H1 (cell line): ENCODE measurements at regions of chr3 and their contacts with region 1.

Region 1: DNA sequence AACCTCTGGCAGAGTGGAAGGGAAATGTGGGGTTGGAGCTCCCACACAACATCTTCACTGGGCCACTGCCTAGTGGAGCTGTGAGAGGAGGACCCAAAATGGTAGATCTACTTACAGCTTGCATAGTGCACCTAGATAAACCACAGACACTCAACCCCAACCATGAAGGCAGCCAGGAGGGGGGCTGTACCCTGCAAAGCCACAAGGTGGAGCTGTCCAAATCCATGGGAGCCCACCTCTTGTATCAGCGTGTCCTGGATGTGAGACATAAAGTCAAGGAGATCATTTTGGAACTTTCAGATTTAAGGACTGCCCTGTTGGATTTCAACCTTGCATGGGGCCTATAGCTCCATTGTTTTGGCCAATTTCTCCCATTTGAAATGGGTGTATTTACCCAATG is 20.9 kb downstream of the TP63 start:
- DNase-seq: peak in 1 of 2 experiments; percentile 86
- H3K4me3 ChIP-seq: no peak overlapping the region
- H3K27ac ChIP-seq: no peak overlapping the region
- H3K4me1 ChIP-seq: no peaks in the 10 kb centered on the region
- H3K27me3 ChIP-seq: no peaks in the 10 kb centered on the region
- CTCF ChIP-seq: peak; percentile 72 to 88 (median 85)
- EP300 ChIP-seq: no peak
- POLR2A ChIP-seq: no peak
- RAD21 ChIP-seq: peak; percentile 72 to 77

Region 2: GRCh38 chr3:189606774-189607173 is 45.3 kb before region 1 on chr3:
- CTCF ChIA-PET with region 1: no interaction called
- POLR2A ChIA-PET with region 1: no interaction called
- DNase-seq: no peak
- H3K4me3 ChIP-seq: no peak overlapping the region
- H3K27ac ChIP-seq: no peak overlapping the region
- H3K4me1 ChIP-seq: no peaks in the 10 kb centered on the region
- H3K27me3 ChIP-seq: peaks cover 0 to 1% (median 0%) of the 10 kb centered on the region in 4 experiments; a peak in 1 of 7 replicates
- CTCF ChIP-seq: no peak
- EP300 ChIP-seq: no peak
- POLR2A ChIP-seq: no peak
- RAD21 ChIP-seq: no peak

Region 3: GRCh38 chr3:189638276-189639031 is 13.6 kb before region 1 on chr3:
- CTCF ChIA-PET with region 1: interaction called, 15 read pairs
- POLR2A ChIA-PET with region 1: no interaction called
- DNase-seq: no peak
- H3K4me3 ChIP-seq: no peak overlapping the region
- H3K27ac ChIP-seq: no peak overlapping the region
- H3K4me1 ChIP-seq: peaks cover 0 to 2% (median 0%) of the 10 kb centered on the region in 4 experiments; a peak in 1 of 7 replicates
- H3K27me3 ChIP-seq: no peaks in the 10 kb centered on the region
- CTCF ChIP-seq: no peak
- EP300 ChIP-seq: no peak
- POLR2A ChIP-seq: no peak
- RAD21 ChIP-seq: no peak

Region 4: DNA sequence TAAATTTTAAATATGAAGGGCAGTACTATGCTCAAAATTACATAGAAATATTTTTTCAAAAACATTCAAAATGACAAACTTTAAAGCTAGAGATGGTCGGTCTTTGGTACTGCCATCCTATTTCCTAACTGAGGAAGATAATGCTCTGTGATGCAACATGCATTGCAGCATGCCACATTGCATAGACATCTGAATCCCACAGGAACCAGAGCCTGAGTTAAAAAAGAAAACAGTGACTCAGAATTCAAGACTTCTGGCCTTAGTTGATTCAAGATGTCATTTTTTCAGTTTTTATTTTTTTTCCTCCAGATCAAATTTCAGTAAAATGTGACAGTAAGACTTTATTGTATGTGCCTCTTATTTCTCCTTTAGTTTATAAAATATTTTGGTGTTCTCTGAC is 12.3 kb after region 1 on chr3:
- CTCF ChIA-PET with region 1: interaction called, 10 read pairs
- POLR2A ChIA-PET with region 1: no interaction called
- DNase-seq: no peak
- H3K4me3 ChIP-seq: no peak overlapping the region
- H3K27ac ChIP-seq: no peak overlapping the region
- H3K4me1 ChIP-seq: no peaks in the 10 kb centered on the region
- H3K27me3 ChIP-seq: no peaks in the 10 kb centered on the region
- CTCF ChIP-seq: no peak
- EP300 ChIP-seq: no peak
- POLR2A ChIP-seq: no peak
- RAD21 ChIP-seq: no peak

Region 5: DNA sequence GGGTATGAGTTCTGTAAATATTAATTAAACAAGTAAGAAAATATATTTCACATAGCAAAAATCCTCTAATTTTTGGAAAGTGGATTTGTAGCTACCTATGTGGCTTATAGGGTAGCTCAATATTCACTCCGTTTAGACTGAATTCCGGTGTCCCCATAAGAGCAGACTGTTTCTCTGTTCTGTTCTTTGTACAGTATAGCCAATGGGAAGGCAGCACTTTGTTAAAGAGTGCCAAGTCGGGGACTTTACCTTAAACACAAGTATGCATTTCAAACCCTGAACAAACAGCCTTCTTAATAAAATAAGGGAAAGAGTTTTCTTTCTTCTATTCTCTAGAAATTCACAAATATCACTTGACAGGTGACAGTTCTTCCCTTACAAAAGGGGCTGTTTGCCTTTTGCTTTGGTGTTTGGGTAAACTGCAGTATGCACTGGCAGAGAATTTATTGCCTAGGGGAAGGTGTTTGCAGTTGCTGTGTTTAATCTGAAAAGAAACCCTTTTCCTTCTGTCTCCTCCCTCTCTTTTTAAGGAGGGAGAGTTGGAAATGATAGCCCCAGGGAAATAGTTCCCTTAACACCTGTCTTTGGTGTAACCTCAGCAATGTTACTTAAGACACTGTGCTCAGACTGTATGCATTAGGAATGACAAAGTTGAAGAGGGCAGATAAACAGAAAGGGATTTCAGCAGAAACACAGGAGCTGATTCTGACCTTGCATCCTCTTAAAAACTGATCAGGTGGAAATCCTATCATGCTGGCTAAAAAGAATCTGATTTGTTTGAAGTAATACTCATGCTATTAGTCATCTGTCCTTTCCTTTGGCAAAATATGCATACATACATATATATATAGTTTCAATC is 104.4 kb after region 1 on chr3:
- CTCF ChIA-PET with region 1: no interaction called
- POLR2A ChIA-PET with region 1: no interaction called
- DNase-seq: no peak
- H3K4me3 ChIP-seq: no peak overlapping the region
- H3K27ac ChIP-seq: no peak overlapping the region
- H3K4me1 ChIP-seq: no peaks in the 10 kb centered on the region; a peak in 1 of 7 replicates
- H3K27me3 ChIP-seq: no peaks in the 10 kb centered on the region
- CTCF ChIP-seq: no peak
- EP300 ChIP-seq: no peak
- POLR2A ChIP-seq: no peak
- RAD21 ChIP-seq: no peak

Region 6: GRCh38 chr3:189947948-189948723 is 296.1 kb after region 1 on chr3:
- CTCF ChIA-PET with region 1: interaction called, 23 read pairs
- POLR2A ChIA-PET with region 1: no interaction called
- DNase-seq: no peak
- H3K4me3 ChIP-seq: no peak overlapping the region
- H3K27ac ChIP-seq: no peak overlapping the region
- H3K4me1 ChIP-seq: no peaks in the 10 kb centered on the region
- H3K27me3 ChIP-seq: no peaks in the 10 kb centered on the region
- CTCF ChIP-seq: peak in 2 of 3 experiments; percentile 55 to 56; a peak in 2 of 4 replicates
- EP300 ChIP-seq: no peak
- POLR2A ChIP-seq: no peak
- RAD21 ChIP-seq: peak; percentile 90